Colonic mucosa (tissue), 4 donors: ENCODE measurements at regions of chr1 and their contacts with region 1.

Region 1: GRCh38 chr1:24201941-24202440 is 14.9 kb upstream of the IFNLR1 start:
- DNase-seq: peak; percentile 96
- H3K4me3 ChIP-seq: no peak overlapping the region
- H3K27ac ChIP-seq: peak overlapping the region; percentile 40
- H3K4me1 ChIP-seq: peaks cover 8% of the 10 kb centered on the region
- H3K27me3 ChIP-seq: no peaks in the 10 kb centered on the region
- CTCF ChIP-seq: peak; percentile 78

Region 2: GRCh38 chr1:24150234-24151174 is 51.5 kb before region 1 on chr1:
- intact Hi-C with region 1: loop called (anchors 5 kb)
- DNase-seq: peak; percentile 99
- H3K4me3 ChIP-seq: no peak overlapping the region
- H3K27ac ChIP-seq: peak overlapping the region; percentile 63
- H3K4me1 ChIP-seq: peaks cover 8% of the 10 kb centered on the region
- H3K27me3 ChIP-seq: no peaks in the 10 kb centered on the region
- CTCF ChIP-seq: peak; percentile 89

Region 3: DNA sequence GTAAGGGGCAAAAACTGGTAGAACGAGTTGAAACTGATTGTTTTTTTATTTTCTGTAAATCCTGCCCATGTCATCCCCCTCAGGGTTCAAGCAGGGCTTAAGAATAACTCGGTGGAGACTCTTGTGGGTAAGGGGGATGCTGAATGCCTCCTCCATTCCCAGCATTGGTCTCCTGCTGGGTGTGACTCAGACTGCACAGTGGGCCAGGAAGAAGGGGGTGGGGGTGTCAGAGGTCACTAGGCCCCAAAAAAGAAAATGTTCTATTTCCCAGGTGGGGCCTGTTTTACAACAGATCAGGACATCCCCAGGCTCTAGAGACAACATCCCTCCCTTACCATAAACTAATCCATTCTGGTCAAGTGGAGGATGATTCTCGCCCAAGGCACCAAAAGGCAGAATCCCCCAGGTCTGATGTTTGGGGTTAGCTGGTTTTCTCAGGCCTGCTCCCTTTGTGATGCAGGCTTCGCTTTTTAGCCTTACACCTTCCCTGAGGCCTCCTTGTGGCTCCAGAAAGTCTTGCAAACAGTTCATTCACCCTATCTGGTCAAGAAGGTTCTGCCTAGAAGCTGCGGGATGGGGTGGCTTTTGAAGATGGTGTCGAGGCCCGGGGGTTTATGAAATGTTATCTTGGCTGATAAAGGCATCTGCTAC is 106.5 kb after region 1 on chr1:
- intact Hi-C with region 1: loop called (anchors 10 kb)
- DNase-seq: no peak
- H3K4me3 ChIP-seq: no peak overlapping the region
- H3K27ac ChIP-seq: no peak overlapping the region
- H3K4me1 ChIP-seq: no peaks in the 10 kb centered on the region
- H3K27me3 ChIP-seq: no peaks in the 10 kb centered on the region
- CTCF ChIP-seq: no peak

Region 4: DNA sequence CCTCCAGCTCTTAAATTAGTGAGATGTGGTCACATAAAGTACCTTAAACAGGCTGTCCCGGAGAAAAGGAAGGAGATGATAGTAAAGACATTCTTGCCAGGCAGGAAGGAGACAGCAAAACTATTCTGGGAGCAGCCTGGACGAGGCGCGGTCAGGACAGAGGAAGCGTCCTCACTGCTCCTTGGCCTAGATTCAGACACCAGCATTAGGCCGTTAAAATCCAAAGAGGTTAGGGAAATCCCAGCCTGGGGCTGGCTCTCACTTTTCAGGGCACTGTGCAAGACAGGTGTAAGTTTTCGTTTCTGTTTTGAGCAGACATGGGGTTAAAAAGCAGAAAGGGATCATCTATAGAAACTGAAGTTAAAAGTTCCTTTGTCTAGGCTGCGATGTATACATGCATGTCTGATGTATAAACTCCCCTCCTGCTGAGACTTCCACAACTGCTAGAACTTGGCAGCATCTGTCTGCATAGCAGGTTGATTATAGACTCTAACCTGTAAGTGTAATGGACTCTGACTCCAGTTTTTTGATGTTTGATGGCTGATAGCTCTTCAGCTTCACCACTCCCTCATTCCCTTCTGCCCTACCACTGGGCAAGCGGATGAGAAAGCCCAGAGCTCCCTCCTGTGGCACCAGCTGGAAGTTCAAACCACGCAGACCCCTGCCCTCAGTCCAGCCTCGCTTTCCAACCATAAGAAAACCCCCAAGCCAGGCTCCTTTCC is 190.1 kb after region 1 on chr1:
- intact Hi-C with region 1: loop called (anchors 1 kb)
- DNase-seq: peak; percentile 77
- H3K4me3 ChIP-seq: no peak overlapping the region
- H3K27ac ChIP-seq: peak overlapping the region; percentile 65
- H3K4me1 ChIP-seq: no peaks in the 10 kb centered on the region
- H3K27me3 ChIP-seq: no peaks in the 10 kb centered on the region
- CTCF ChIP-seq: peak; percentile 82

Region 5: DNA sequence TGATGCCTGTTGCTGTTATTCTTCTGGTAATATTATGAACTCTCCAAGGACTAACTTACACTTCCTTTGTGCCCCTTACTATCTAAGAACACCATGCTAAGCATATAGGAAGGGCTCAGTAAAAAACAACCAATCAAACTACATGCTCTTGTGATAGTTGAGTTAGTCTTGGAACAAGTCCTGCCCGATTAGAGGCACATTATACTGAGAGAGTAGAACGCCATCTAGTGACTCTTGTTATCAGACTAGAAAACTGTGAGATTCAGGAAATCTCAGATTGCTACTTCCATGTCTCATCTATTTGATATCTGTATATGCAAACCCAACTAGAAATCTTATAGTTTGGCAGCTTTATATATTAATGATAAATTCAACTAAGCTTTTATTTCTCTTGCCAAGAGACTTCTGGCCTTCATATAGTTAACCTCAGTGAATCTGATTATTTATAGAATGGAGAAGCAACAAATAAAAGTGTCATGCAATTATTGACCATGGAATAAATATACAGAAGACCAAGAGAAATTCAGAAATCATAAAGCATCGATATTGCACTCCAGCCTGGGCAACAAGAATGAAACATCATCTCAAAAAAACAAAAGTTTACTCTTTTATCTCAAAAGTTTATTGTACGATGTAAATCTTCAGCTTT is 433.3 kb after region 1 on chr1:
- intact Hi-C with region 1: loop called (anchors 5 kb)
- DNase-seq: no peak
- H3K4me3 ChIP-seq: no peak overlapping the region
- H3K27ac ChIP-seq: no peak overlapping the region
- H3K4me1 ChIP-seq: no peaks in the 10 kb centered on the region
- H3K27me3 ChIP-seq: no peaks in the 10 kb centered on the region
- CTCF ChIP-seq: peak; percentile 38